Prostate gland (tissue), 2 donors: ENCODE measurements at regions of chr19 and their contacts with region 1.

Region 1: GRCh38 chr19:19145684-19146608 is 7.7 kb upstream of the TMEM161A start:
- DNase-seq: peak; percentile 53
- H3K4me3 ChIP-seq: no peak overlapping the region
- H3K27ac ChIP-seq: no peak overlapping the region
- H3K4me1 ChIP-seq: no peaks in the 10 kb centered on the region
- H3K27me3 ChIP-seq: no peaks in the 10 kb centered on the region
- CTCF ChIP-seq: peak; percentile 85 to 99 (median 94)
- POLR2A ChIP-seq: no peak

Region 2: GRCh38 chr19:19224852-19225494 is 79.0 kb after region 1 on chr19:
- intact Hi-C with region 1: loop called (anchors 10 kb)
- DNase-seq: peak; percentile 26
- H3K4me3 ChIP-seq: peak overlapping the region; percentile 1 to 21
- H3K27ac ChIP-seq: no peak overlapping the region
- H3K4me1 ChIP-seq: no peaks in the 10 kb centered on the region
- H3K27me3 ChIP-seq: no peaks in the 10 kb centered on the region
- CTCF ChIP-seq: peak in 2 of 4 experiments; percentile 49 to 75
- POLR2A ChIP-seq: no peak

Region 3: DNA sequence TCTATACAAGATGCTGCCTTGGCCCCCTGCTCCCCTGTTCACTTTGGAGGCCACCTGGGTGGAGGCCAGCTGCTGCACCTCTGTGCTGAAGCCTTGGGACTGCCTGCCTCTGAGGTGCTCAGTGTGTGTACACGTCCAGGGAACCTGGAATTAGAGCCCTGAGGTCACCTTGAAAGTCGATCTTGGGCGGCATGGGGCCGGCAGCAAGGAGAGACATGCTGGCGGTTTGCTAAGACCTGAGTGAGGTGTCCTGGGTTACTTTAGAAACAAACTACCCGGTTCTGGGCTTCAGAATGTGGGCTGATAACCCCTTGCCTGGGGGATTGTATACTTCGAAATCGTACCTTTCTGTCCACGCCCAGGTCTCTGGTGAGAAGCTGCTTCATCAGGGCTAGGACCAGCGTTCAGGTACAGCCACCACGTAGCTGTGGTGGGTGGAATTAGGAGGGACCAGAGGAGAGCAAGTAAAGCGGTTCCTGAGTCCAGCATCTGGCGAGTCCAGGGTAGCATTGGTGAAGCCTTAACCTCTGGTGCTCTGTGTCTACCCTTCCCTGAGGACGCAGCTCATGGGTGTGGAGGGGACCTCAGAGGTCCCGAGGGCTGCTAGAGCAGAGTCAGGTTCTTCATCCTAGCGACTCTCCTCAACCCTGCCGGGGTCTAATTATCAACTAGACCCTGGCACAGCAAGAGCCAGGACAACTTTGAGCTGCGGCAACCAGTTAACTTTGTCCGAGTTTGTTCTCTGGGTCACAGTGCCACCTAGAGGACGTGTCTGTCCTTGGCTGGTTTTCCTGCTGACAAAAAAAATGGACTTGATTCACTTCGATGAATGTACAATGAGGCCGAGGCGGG is 344.1 kb after region 1 on chr19:
- intact Hi-C with region 1: loop called (anchors 5 kb)
- DNase-seq: peak; percentile 66
- H3K4me3 ChIP-seq: no peak overlapping the region
- H3K27ac ChIP-seq: peak overlapping the region in 1 of 2 donors; percentile 27
- H3K4me1 ChIP-seq: no peaks in the 10 kb centered on the region
- H3K27me3 ChIP-seq: no peaks in the 10 kb centered on the region
- CTCF ChIP-seq: peak; percentile 70 to 86 (median 84)
- POLR2A ChIP-seq: no peak